ENCODE measurements at regions of chr1 and their contacts with region 1.

Region 1: DNA sequence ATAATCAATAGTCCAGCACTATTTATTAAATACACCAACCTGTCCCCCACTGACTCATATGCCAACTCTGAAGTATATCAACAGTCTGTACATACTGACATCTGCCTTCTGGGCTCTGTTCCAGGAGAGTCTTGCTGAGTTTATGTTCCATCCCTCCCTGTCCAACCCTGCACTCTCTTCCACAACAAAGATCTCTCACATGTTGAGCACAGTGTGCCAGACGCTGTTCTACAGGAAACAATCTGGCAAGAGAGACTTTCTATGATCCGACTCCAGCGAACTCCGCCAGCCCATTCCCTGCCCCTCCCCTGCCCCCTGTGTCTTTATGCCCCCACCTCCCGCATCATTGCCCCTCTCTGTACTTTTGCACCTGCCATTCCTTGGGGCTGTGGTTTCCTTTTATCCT is 3.4 kb downstream of the LACTBL1 start:
- DNase-seq: peak; percentile 74
- H3K4me3 ChIP-seq: no peak overlapping the region
- H3K27ac ChIP-seq: peak overlapping the region in 3 of 4 donors; percentile 9 to 70 (median 56)
- H3K4me1 ChIP-seq: peaks cover 0 to 21% (median 10%) of the 10 kb centered on the region in 4 donors
- H3K27me3 ChIP-seq: no peaks in the 10 kb centered on the region
- CTCF ChIP-seq: no peak
- EP300 ChIP-seq: no peak
- POLR2A ChIP-seq: no peak

Region 2: GRCh38 chr1:22922640-22923039 is 46.7 kb before region 1 on chr1:
- intact Hi-C with region 1: no loop called
- DNase-seq: no peak
- H3K4me3 ChIP-seq: no peak overlapping the region
- H3K27ac ChIP-seq: no peak overlapping the region
- H3K4me1 ChIP-seq: no peaks in the 10 kb centered on the region
- H3K27me3 ChIP-seq: no peaks in the 10 kb centered on the region
- CTCF ChIP-seq: no peak
- EP300 ChIP-seq: no peak
- POLR2A ChIP-seq: no peak

Region 3: GRCh38 chr1:23019094-23019862 is 50.0 kb after region 1 on chr1 and contains the start of gene KDM1A:
- intact Hi-C with region 1: loop called (anchors 5 kb)
- DNase-seq: peak; percentile 98
- H3K4me3 ChIP-seq: peak within 1 kb of the TSS; percentile 79 to 99 (median 87)
- H3K27ac ChIP-seq: peak within 1 kb of the TSS; percentile 92 to 97 (median 93)
- H3K4me1 ChIP-seq: peaks cover 0 to 17% (median 14%) of the 10 kb centered on the region in 4 donors
- H3K27me3 ChIP-seq: no peaks in the 10 kb centered on the region
- CTCF ChIP-seq: no peak
- EP300 ChIP-seq: no peak
- POLR2A ChIP-seq: peak; percentile 41 to 70
- total RNA-seq, gene KDM1A: 46.0 to 58.6 (median 49.5) TPM

Measured in sigmoid colon (tissue), 7 donors.